ENCODE measurements at regions of chr21 and their contacts with region 1.

Region 1: DNA sequence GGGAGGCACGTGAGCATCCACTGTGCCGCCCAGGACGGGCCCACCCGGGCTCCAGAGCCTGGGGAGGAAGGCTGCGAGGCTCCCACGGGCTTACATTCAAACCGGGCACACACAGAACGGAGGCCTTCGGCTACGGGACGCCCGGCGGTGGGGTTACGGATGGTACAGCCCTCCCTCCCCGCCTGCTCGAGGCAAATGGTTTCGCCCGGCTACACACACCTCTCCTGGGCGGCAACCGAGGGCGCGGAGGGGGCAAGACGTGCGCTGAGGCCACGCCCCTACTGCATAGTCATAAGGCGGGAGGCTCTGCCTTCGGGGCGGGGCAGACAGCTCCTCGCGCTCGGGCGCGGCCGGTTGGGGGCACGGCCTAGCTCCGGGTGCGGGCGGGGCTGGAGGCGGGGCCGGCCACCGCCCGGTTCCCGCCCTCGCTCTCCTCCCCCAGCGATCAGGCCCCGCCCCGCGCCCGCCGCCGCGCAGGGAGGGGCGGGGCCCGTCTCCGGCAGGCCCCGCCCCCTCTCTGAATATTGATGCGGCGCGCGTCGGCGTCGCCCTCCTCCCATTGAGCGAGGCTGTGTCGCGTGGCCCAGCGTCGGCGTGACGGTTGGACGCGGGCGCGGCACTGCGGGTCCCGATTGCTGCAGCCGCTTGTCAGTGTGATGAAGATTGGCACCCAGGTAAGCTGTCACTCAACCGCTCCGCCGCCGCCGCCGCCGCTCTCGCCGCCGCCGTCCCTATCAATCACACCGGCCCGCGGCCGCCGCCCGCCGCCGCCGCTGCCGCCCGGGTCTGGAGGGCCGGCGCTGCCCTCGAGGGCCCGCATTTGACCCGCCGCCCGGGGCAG is at the start of gene PKNOX1:
- DNase-seq: peak; percentile 94 to 100 (median 98)

Region 2: GRCh38 chr21:42892931-42893755 is 81.1 kb before region 1 on chr21 and contains the start of gene NDUFV3:
- intact Hi-C with region 1: loop called (anchors 5 kb)
- DNase-seq: peak; percentile 100

Region 3: DNA sequence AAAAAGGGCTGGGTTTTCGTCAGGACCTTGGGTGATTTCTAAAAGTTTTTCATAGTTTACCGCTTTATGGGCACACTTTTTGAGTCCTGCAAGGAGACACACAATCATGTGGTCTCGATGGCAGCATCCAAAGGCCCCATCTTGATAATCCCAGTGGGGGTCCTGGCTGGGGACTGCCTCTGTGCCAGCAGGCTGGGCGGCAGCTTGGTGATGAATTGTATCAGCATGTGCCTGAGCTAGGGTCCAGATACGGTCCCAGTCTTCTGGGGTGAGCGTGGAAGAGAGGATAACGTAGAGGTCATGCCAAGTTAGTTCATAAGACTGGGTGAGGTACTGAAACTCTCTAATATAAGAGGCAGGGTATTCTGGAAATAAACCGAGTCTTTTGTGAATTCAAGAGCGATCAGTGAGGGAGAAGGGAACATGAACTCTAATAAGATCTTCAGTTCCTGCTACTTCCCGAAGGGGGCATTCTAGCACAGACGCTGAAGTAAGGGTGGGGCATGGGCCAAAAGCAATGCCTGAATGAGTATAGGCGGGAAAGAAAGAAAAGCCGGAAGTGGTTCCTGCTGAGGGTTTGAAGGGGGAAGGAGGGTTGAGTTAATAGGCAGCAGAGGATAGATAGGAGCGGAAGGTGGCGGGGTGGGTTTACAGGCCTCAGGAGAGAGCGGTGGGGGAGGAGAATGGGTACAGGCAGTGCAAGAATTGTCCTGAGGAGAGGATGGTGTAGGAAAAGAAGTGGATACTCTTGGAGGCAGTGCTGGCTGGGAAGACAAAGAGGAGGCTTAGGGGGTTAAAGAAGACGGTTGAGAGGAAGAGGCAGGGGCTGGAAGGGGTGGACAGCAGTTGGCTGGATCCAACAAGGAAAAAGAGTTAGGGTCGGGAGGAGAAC is 50.4 kb before region 1 on chr21:
- intact Hi-C with region 1: loop called (anchors 10 kb)
- DNase-seq: peak in 8 of 10 donors; percentile 39 to 93 (median 67)

Region 4: DNA sequence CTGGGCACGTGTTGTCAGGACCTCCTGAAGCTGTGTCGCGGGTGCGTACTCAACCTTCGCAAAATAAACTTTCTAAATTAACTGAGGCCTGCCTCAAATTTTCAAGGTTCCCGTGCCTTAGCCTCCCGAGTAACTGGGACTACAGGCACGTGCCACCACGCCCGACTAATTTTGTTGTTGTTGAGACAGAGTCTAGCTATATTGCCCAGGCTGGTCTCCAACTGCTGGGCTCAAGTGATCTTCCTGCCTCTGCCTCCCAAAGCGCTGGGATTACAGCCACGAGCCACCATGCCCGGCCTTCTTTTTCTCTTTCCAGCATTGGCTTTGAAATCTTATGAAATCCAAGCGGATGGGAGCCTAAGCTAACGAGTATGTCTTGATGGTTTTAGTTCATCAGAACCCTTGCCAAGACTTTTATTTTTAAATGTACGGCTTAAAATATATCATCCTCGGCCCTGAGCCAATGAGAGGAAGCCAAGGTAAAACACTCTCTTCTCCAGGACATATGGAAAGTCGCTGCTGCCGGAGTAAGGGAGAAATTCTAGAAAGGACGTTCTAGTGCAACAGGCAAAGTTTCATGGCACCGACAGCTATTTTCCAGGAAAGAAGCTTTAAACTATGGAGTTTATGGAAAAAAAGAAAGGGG is 36.1 kb before region 1 on chr21:
- intact Hi-C with region 1: no loop called
- DNase-seq: no peak

Measured in posterior cingulate gyrus (tissue), 11 donors.